Right ventricle myocardium inferior (tissue), 1 donor: ENCODE measurements at regions of chr12 and their contacts with region 1.

Region 1: GRCh38 chr12:77725611-77726010 is 105.1 kb upstream of the NAV3 start:
- DNase-seq: no peak
- ATAC-seq: no peak

Region 2: GRCh38 chr12:77925536-77926108 is 200.0 kb after region 1 on chr12:
- intact Hi-C with region 1: loop called (anchors 1 kb)
- DNase-seq: no peak
- ATAC-seq: peak; percentile 95